PC-9 (cell line): ENCODE measurements at regions of chr3 and their contacts with region 1.

Region 1: DNA sequence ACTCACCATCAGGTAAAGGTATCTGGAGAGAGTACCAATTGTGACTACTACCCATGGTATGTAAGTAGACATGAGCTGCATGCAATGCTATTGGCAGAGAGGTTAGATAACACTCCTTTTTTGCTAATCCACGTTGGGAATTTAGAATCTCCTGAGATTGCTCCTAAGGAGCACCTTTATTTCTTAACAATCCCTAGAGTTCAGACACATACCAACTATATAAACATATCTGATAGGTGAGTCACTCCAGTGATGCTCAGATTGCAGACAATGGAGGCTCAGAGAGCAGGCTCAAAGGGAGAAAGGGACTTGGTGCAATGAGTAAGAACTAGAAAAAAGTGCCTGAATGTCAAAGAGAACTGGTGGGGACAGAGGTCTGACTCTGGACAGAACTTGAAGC is 47.0 kb upstream of the LRRFIP2 start:
- DNase-seq: peak; percentile 61 to 99
- H3K4me3 ChIP-seq: no peak overlapping the region
- H3K27ac ChIP-seq: peak overlapping the region; percentile 38
- H3K4me1 ChIP-seq: peaks cover 41% of the 10 kb centered on the region
- H3K27me3 ChIP-seq: no peaks in the 10 kb centered on the region
- CTCF ChIP-seq: no peak

Region 2: DNA sequence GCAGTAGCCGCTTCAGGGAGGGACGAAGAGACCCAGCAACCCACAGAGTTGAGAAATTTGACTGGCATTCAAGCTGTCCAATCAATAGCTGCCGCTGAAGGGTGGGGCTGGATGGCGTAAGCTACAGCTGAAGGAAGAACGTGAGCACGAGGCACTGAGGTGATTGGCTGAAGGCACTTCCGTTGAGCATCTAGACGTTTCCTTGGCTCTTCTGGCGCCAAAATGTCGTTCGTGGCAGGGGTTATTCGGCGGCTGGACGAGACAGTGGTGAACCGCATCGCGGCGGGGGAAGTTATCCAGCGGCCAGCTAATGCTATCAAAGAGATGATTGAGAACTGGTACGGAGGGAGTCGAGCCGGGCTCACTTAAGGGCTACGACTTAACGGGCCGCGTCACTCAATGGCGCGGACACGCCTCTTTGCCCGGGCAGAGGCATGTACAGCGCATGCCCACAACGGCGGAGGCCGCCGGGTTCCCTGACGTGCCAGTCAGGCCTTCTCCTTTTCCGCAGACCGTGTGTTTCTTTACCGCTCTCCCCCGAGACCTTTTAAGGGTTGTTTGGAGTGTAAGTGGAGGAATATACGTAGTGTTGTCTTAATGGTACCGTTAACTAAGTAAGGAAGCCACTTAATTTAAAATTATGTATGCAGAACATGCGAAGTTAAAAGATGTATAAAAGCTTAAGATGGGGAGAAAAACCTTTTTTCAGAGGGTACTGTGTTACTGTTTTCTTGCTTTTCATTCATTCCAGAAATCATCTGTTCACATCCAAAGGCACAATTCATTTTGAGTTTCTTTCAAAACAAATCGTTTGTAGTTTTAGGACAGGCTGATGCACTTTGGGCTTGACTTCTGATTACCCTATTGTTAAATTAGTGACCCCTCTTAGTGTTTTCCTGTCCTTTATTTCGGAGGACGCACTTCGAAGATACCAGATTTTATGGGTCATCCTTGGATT is 227.8 kb before region 1 on chr3 and contains the start of gene MLH1:
- CTCF ChIA-PET with region 1: no interaction called
- POLR2A ChIA-PET with region 1: interaction called, 3 read pairs
- intact Hi-C with region 1: loop called (anchors 5 kb)
- DNase-seq: peak in 1 of 2 experiments; percentile 99
- H3K4me3 ChIP-seq: peak within 1 kb of the TSS; percentile 83
- H3K27ac ChIP-seq: peak within 1 kb of the TSS; percentile 79
- H3K4me1 ChIP-seq: peaks cover 28% of the 10 kb centered on the region
- H3K27me3 ChIP-seq: no peaks in the 10 kb centered on the region
- CTCF ChIP-seq: no peak
- total RNA-seq, gene MLH1: 30.9 and 35.2 TPM in 2 replicates

Region 3: DNA sequence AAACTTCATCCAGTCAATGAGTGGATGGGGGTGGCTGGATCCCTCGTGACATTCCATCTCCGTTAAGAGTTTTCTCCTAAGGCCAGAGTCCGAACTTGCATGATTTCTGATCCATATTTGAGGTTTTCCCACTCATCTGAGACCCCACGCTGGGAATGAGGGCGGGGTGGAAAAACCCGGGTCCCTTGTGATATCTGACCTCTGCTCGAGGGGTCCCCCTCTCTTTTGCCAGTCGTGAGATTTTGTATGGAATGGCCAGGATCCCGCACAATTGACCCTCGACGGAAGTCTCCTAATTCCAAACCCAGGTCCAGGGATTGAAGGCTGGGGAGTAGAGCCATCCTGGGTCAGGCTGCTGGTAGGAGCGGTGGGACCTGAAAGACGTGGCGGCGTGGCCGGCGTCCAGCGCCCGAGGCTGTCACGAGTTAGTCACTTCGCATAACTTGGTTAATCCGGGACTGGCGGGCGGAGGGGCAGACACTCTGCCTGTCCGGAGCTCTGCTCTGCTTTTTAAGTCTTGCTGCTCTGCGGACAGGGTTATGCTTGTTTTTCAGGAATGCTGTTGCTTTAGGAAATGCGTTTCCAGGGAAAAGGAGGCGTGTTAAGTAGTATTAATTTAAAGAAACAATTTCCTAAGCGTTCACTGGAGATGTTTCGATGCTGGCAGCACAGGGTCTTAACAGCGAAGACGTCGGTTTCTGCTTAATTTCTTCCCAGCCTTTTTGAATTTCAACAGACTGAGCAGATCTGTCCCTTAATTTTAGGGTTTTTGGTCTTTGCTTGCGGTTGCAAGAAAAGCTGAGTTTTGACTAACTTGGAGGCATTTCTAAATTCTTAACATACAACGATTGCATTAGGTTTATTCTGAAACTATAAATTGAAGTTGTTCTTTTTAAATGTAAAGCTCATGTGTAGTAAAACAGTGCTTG is 22.7 kb after region 1 on chr3:
- CTCF ChIA-PET with region 1: no interaction called
- POLR2A ChIA-PET with region 1: no interaction called
- intact Hi-C with region 1: loop called (anchors 1 kb)
- DNase-seq: peak; percentile 77 to 84
- H3K4me3 ChIP-seq: peak overlapping the region; percentile 80
- H3K27ac ChIP-seq: peak overlapping the region; percentile 80
- H3K4me1 ChIP-seq: peaks cover 37% of the 10 kb centered on the region
- H3K27me3 ChIP-seq: no peaks in the 10 kb centered on the region
- CTCF ChIP-seq: no peak

Region 4: DNA sequence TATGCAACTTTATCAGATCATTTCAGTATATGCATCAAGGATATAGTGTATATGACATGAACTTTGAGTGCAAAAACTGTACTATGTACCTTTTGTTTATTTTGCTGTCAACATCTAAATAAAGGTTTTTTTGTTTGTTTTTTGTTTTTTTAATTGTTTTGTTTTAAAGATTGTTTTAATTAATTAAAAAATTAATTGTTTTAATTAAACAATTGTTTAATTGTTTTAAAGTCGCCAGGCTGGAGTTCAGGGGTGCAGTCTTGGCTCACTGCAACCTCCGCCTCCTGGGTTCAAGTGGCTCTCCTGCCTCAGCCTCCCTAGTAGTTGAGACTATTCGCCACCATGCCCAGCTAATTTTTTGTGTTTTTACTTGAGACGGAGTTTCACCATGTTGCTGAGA is 32.9 kb after region 1 on chr3:
- CTCF ChIA-PET with region 1: no interaction called
- POLR2A ChIA-PET with region 1: no interaction called
- intact Hi-C with region 1: no loop called
- DNase-seq: no peak
- H3K4me3 ChIP-seq: no peak overlapping the region
- H3K27ac ChIP-seq: no peak overlapping the region
- H3K4me1 ChIP-seq: no peaks in the 10 kb centered on the region
- H3K27me3 ChIP-seq: no peaks in the 10 kb centered on the region
- CTCF ChIP-seq: no peak

Region 5: GRCh38 chr3:38969317-38970235 is 1748.2 kb after region 1 on chr3:
- CTCF ChIA-PET with region 1: no interaction called
- POLR2A ChIA-PET with region 1: interaction called, 13 read pairs
- intact Hi-C with region 1: no loop called
- DNase-seq: no peak
- H3K4me3 ChIP-seq: no peak overlapping the region
- H3K27ac ChIP-seq: no peak overlapping the region
- H3K4me1 ChIP-seq: no peaks in the 10 kb centered on the region
- H3K27me3 ChIP-seq: peaks cover 31% of the 10 kb centered on the region
- CTCF ChIP-seq: no peak